ENCODE measurements at regions of chr17 and their contacts with region 1.

Region 1: DNA sequence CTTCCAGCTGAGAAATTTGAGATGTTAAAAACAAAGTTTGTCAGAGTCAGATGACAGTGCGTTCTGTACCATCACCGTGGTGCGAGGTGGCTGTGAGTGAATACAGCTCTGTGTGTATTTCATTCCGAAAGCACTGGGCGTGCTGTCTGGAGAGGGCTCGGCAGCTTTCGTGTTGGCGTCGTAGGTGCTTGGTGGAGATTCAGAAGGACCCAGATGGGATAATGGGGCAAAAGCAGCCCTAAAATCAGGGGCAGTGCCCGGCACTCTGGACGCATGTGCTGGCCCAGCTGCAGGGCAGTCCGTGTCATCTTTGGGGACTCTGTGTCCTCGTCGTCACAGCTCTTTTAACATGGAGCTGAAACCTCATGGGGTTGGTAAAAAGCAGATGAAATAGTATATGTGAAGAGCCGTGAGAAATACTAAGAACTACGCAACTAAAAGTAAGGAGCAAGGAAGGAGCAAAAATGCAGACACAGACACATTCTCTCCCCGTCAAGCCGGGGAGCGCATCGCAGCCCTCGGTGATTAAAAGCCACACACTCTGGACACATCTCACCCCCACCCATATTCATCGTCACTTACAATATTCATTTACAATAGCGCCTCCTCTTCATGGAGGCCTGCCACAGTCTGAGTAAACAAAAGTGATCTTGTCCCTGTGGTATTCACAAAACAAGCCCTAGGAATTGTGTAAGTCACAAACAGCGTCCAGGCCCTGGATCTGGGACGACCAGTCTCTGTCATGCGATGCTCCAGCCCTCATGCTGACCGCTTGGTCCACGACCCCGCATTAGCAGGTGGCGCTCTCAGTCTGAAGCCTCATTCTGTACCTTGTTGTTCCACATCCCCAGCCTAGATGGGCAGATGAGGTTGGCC is 206.7 kb downstream of the RPTOR start:
- DNase-seq: peak; percentile 96 to 97
- ATAC-seq: peak; percentile 86
- H3K4me3 ChIP-seq: peak overlapping the region; percentile 32 to 38 (median 35)
- H3K27ac ChIP-seq: peak overlapping the region; percentile 93 to 96 (median 96)
- H3K4me1 ChIP-seq: peaks cover 25 to 28% of the 10 kb centered on the region in 2 donors
- H3K27me3 ChIP-seq: no peaks in the 10 kb centered on the region
- CTCF ChIP-seq: peak in 1 of 5 experiments; percentile 7
- POLR2A ChIP-seq: peak; percentile 74 to 90

Region 2: GRCh38 chr17:80649678-80650672 is 101.3 kb before region 1 on chr17:
- in situ Hi-C with region 1: no loop called
- intact Hi-C with region 1: loop called (anchors 1 kb)
- DNase-seq: peak; percentile 22 to 48
- ATAC-seq: peak; percentile 29 to 43
- H3K4me3 ChIP-seq: peak overlapping the region in 1 of 4 donors; percentile 3
- H3K27ac ChIP-seq: peak overlapping the region; percentile 56 to 78 (median 62)
- H3K4me1 ChIP-seq: peaks cover 30 to 47% of the 10 kb centered on the region in 2 donors
- H3K27me3 ChIP-seq: no peaks in the 10 kb centered on the region
- CTCF ChIP-seq: peak in 4 of 5 experiments; percentile 26 to 48 (median 38)
- POLR2A ChIP-seq: no peak

Region 3: GRCh38 chr17:80773243-80773991 is 22.1 kb after region 1 on chr17:
- in situ Hi-C with region 1: no loop called
- intact Hi-C with region 1: loop called (anchors 1 kb)
- DNase-seq: peak; percentile 94 to 95
- ATAC-seq: peak; percentile 81 to 82
- H3K4me3 ChIP-seq: peak overlapping the region; percentile 19 to 34 (median 23)
- H3K27ac ChIP-seq: peak overlapping the region; percentile 88 to 97 (median 93)
- H3K4me1 ChIP-seq: peaks cover 41 to 51% of the 10 kb centered on the region in 2 donors
- H3K27me3 ChIP-seq: no peaks in the 10 kb centered on the region
- CTCF ChIP-seq: no peak
- POLR2A ChIP-seq: peak; percentile 41 to 57

Region 4: GRCh38 chr17:80826955-80827645 is 75.8 kb after region 1 on chr17:
- in situ Hi-C with region 1: no loop called
- intact Hi-C with region 1: loop called (anchors 2 kb)
- DNase-seq: peak; percentile 87 to 91
- ATAC-seq: peak; percentile 89
- H3K4me3 ChIP-seq: peak overlapping the region in 3 of 4 donors; percentile 6 to 22 (median 6)
- H3K27ac ChIP-seq: peak overlapping the region; percentile 86 to 98 (median 94)
- H3K4me1 ChIP-seq: peaks cover 20 to 21% of the 10 kb centered on the region in 2 donors
- H3K27me3 ChIP-seq: no peaks in the 10 kb centered on the region
- CTCF ChIP-seq: peak in 2 of 5 experiments; percentile 10 to 14
- POLR2A ChIP-seq: peak in 1 of 2 donors; percentile 40

Region 5: DNA sequence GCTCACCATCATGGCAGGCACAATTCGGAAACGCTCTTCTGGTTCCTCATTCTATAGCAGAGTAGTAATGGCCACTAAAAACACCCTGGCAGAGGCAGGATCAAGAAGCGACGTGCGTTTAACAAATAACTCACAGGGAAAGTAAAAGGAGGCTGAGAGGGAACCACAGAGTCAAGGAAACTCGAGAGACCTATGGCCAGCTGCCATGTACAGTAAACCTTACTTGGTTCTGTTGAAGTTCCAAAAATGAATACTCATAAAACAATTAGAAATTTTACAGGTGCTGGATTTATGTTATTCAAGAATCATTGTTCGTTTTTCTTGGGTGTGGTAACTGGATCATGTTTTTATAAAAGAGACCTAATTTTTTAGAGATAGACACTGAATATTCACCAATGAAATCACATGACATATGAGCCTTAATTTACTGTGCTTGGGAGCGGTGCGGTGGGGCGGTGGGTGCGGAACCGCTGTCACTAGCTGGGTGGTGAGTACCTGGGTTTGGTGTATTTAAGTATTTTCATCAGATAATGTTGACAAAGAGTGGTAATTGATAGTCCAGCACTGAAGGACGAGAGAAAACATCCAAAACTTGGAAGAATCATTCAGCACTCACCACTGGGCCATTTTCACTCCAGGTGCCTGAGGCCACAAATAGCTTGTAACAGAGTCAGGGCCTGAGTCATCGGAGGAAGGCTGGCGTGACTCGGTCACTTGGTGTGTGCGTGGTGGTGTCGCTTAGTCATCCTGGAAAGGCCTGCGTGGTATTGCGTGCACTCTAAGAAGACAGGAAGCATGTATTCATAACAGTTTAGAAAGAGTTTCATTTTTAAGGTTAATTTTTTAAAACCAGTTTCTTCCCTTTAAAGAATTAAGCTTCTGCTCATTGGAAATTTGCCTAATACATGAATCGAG is 104.9 kb after region 1 on chr17:
- in situ Hi-C with region 1: no loop called
- intact Hi-C with region 1: loop called (anchors 2 kb)
- DNase-seq: peak; percentile 94 to 96
- ATAC-seq: peak; percentile 93 to 94
- H3K4me3 ChIP-seq: no peak overlapping the region
- H3K27ac ChIP-seq: peak overlapping the region; percentile 90 to 93 (median 91)
- H3K4me1 ChIP-seq: peaks cover 42 to 45% of the 10 kb centered on the region in 2 donors
- H3K27me3 ChIP-seq: no peaks in the 10 kb centered on the region
- CTCF ChIP-seq: no peak
- POLR2A ChIP-seq: peak; percentile 56 to 74

Measured in gastrocnemius medialis (tissue), 4 donors.